Motor neuron (in vitro differentiated cells): ENCODE measurements at regions of chr10 and their contacts with region 1.

Region 1: GRCh38 chr10:43026011-43026973 is 50.6 kb upstream of the RET start:
- ATAC-seq: peak in 5 of 8 experiments; percentile 35 to 84 (median 67)
- H3K4me3 ChIP-seq: no peak overlapping the region
- H3K27ac ChIP-seq: no peak overlapping the region
- H3K4me1 ChIP-seq: peaks cover 9 to 10% of the 10 kb centered on the region in 2 donors

Region 2: GRCh38 chr10:42933448-42934340 is 92.6 kb before region 1 on chr10:
- in situ Hi-C with region 1: loop called in 1 of 9 experiments (anchors 25 kb)
- ATAC-seq: peak in 7 of 8 experiments; percentile 28 to 83 (median 64)
- H3K4me3 ChIP-seq: peak overlapping the region in 1 of 5 donors; percentile 31
- H3K27ac ChIP-seq: no peak overlapping the region
- H3K4me1 ChIP-seq: peaks cover 0 to 14% of the 10 kb centered on the region in 2 donors